Activated naive CD4-positive, alpha-beta T cell treated with anti-CD3 and anti-CD28 coated beads for 36 hours (primary cell): ENCODE measurements at regions of chr9 and their contacts with region 1.

Region 1: DNA sequence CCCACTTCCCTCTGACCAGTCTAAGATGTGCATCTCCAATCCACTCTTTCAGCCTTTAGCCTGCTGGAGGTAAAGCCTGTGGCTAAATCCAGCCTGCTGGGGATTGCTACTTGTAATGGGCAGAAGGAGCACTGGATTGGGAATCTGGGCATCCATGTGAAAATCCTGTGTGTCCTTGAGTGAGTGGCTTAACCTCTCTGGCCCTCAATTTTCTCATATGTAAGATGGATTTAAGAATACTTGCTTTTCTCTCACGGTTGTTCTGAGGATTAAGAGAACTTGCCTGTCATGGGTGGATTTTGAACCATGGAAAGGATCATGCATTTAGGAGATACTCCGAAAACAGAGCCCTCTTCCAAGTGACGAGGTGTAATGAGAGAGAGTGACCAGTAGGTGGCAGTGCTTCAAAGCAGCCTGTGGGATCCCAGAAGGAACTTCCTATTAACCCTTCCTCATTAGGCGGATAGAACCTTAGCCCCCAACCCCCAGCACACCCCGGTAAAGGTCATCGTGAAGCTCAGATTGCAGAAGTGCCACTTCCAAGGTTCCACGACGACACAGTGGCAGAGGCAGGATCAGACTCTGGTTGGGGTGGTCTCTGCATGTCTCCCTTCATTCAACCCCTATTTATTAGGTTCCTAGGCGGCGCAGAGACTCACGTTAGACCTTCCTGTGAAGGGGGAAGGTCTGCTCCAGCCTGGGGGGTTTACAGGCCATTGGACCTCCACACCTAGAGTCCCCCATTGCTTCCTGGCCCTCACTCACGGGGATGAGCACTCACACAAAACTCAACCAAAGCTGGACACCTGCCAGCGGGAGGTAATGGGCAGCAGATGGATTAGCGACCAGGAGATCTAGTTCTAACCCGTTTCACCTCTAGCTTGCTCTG is 68.7 kb upstream of the ZNF618 start:
- DNase-seq: peak; percentile 64
- H3K4me3 Mint-ChIP-seq: no peak overlapping the region
- H3K27ac Mint-ChIP-seq: no peak overlapping the region
- H3K4me1 Mint-ChIP-seq: no peaks in the 10 kb centered on the region
- H3K27me3 Mint-ChIP-seq: peaks cover 8% of the 10 kb centered on the region

Region 2: GRCh38 chr9:113876151-113876992 is 69.0 kb after region 1 on chr9 and contains the start of gene ZNF618:
- CTCF ChIA-PET with region 1: interaction called, 12 read pairs
- intact Hi-C with region 1: loop called (anchors 1 kb)
- DNase-seq: no peak
- H3K4me3 Mint-ChIP-seq: peak within 1 kb of the TSS; percentile 80
- H3K27ac Mint-ChIP-seq: no peak within 1 kb of the TSS
- H3K4me1 Mint-ChIP-seq: peaks cover 4% of the 10 kb centered on the region
- H3K27me3 Mint-ChIP-seq: peaks cover 14% of the 10 kb centered on the region
- total RNA-seq, gene ZNF618: 0.02 to 0.10 TPM

Region 3: DNA sequence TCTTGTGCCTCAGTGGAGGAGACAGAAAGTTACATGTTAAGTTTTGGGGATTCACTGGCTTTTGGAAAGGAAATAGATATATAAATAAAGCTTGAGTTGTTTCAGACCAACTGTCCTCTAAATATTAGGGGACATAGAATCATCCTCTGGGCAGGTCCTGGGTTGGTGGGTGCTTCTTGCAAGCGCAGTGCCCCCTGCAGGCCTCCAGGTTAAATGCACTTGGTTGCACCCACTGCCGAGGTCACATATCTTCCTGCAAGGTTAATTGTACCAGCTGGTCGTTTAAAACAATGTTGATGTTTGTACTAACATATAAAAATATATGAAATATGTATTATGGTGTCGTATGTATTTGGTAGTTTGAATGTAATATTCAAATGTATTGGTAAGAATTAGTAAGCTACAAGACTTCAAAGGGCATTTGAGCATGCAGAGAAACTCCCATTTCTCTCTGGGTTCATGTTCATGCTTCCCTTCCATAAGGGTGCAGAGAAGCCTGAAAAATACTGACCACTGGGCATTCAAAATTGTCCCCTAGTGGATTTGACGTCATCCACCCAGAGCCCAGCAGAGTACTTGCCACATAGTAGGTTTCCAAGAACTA is 155.7 kb after region 1 on chr9:
- CTCF ChIA-PET with region 1: interaction called, 6 read pairs
- intact Hi-C with region 1: loop called (anchors 1 kb)
- DNase-seq: peak; percentile 63
- H3K4me3 Mint-ChIP-seq: no peak overlapping the region
- H3K27ac Mint-ChIP-seq: no peak overlapping the region
- H3K4me1 Mint-ChIP-seq: no peaks in the 10 kb centered on the region
- H3K27me3 Mint-ChIP-seq: no peaks in the 10 kb centered on the region

Region 4: GRCh38 chr9:114033397-114034103 is 226.1 kb after region 1 on chr9:
- CTCF ChIA-PET with region 1: no interaction called
- intact Hi-C with region 1: loop called (anchors 10 kb)
- DNase-seq: peak; percentile 15
- H3K4me3 Mint-ChIP-seq: no peak overlapping the region
- H3K27ac Mint-ChIP-seq: no peak overlapping the region
- H3K4me1 Mint-ChIP-seq: no peaks in the 10 kb centered on the region
- H3K27me3 Mint-ChIP-seq: no peaks in the 10 kb centered on the region